Panc1 (cell line): ENCODE measurements at regions of chr16 and their contacts with region 1.

Region 1: GRCh38 chr16:49350265-49351095 is 23.1 kb upstream of the C16orf78 start:
- DNase-seq: peak; percentile 32
- ATAC-seq: peak; percentile 86
- H3K4me3 ChIP-seq: no peak overlapping the region
- H3K27ac ChIP-seq: no peak overlapping the region
- H3K4me1 ChIP-seq: no peaks in the 10 kb centered on the region
- H3K27me3 ChIP-seq: no peaks in the 10 kb centered on the region; the same call in 1 of the 2 replicates
- CTCF ChIP-seq: peak; percentile 79

Region 2: DNA sequence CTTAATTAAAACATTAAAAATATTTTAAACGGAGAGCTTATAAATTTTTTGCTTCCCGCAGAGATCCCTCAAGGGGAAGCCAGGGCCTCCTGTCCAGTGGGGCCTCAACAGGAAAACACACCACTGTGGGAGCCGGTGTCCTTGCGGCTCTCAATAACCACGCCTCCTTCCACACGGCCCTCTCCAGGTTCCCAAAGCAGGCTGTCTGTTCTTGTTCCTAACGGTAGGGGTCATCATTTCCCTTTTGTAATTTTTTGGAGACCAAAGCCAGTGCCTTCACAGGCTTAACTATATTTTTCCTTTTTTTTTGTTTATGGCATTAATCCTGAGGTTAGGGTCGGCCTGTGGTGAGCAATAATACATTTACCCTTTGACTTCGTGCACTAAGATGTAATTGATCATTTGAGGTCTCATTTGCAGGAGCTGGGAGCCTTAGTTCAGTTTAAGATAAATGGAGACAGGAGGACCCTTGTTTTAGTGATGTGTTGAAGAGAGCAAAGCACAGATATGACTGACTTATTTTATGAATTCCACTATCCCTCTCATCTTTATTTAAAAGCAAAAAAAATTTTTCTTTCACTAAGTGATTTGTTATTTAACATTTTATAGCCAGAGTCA is 663.0 kb before region 1 on chr16:
- CTCF ChIA-PET with region 1: interaction called, 3 read pairs
- POLR2A ChIA-PET with region 1: no interaction called
- in situ Hi-C with region 1: no loop called
- intact Hi-C with region 1: loop called (anchors 2 kb)
- DNase-seq: peak; percentile 46
- ATAC-seq: peak; percentile 88
- H3K4me3 ChIP-seq: no peak overlapping the region
- H3K27ac ChIP-seq: no peak overlapping the region
- H3K4me1 ChIP-seq: no peaks in the 10 kb centered on the region
- H3K27me3 ChIP-seq: no peaks in the 10 kb centered on the region
- CTCF ChIP-seq: peak; percentile 77